GM12878 (cell line): ENCODE measurements at regions of chr1 and their contacts with region 1.

Region 1: GRCh38 chr1:74733604-74734484 is 892 bp downstream of the TYW3 start:
- DNase-seq: no peak
- ATAC-seq: peak; percentile 66
- H3K4me3 ChIP-seq: peak overlapping the region; percentile 81
- H3K27ac ChIP-seq: peak overlapping the region; percentile 90
- H3K4me1 ChIP-seq: peaks cover 10% of the 10 kb centered on the region; the same call in 1 of the 2 replicates
- H3K27me3 ChIP-seq: no peaks in the 10 kb centered on the region
- CTCF ChIP-seq: peak; percentile 74 to 89 (median 86)
- EP300 ChIP-seq: no peak
- POLR2A ChIP-seq: no peak
- RAD21 ChIP-seq: peak; percentile 84

Region 2: DNA sequence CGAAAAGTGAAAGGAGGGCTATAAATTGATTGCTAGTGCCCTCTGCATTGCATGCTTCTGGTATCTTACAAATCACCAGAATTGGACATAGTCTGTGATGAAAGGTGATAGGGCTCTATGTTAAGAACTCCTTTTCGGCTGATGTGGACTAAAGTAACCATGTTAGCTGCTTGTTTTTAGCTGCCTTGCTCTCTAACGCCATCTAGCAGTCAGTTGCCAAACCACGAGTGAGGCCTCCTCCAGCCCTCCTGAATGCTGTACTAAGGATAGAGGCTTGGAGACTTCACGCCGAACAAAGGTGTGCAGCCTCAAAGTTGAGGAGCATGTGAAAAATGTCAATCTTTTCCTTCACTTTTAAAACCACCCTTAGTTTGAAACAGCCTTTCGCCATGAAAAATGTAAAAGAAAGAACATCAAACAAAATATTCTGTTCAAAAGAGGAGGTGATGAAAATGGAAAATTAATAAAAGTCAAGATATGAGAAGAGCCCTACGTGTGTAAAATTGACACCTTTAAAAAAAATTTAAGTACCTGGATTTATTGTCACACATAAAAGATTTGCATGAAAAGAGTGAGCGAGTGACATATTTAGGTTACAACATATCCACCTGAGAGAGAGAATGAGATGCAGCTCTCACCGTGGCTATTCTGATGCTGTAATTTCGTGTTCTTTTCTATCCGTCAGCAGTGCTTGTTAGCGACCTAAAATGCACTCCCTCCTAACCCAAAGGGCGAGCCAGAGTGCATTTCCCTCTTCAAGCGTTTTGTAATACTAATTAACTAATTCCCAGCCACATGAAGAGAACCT is 229.5 kb before region 1 on chr1:
- CTCF ChIA-PET with region 1: interaction called, 18 read pairs
- POLR2A ChIA-PET with region 1: no interaction called
- RAD21 ChIA-PET with region 1: interaction called, 8 read pairs
- SMC1A ChIA-PET with region 1: interaction called, 18 read pairs
- in situ Hi-C with region 1: no loop called
- intact Hi-C with region 1: loop called (anchors 5 kb)
- DNase-seq: peak; percentile 33
- ATAC-seq: peak; percentile 99
- H3K4me3 ChIP-seq: no peak overlapping the region
- H3K27ac ChIP-seq: no peak overlapping the region
- H3K4me1 ChIP-seq: no peaks in the 10 kb centered on the region
- H3K27me3 ChIP-seq: no peaks in the 10 kb centered on the region
- CTCF ChIP-seq: peak; percentile 82 to 89 (median 88)
- EP300 ChIP-seq: no peak
- POLR2A ChIP-seq: no peak
- RAD21 ChIP-seq: peak; percentile 74

Region 3: GRCh38 chr1:74579425-74579824 is 154.4 kb before region 1 on chr1:
- CTCF ChIA-PET with region 1: interaction called, 4 read pairs
- POLR2A ChIA-PET with region 1: no interaction called
- RAD21 ChIA-PET with region 1: interaction called, 4 read pairs
- SMC1A ChIA-PET with region 1: interaction called, 3 read pairs
- in situ Hi-C with region 1: no loop called
- intact Hi-C with region 1: loop called (anchors 5 kb)
- DNase-seq: peak; percentile 65
- ATAC-seq: peak; percentile 98
- H3K4me3 ChIP-seq: no peak overlapping the region
- H3K27ac ChIP-seq: no peak overlapping the region
- H3K4me1 ChIP-seq: peaks cover 6% of the 10 kb centered on the region; the same call in 1 of the 2 replicates
- H3K27me3 ChIP-seq: no peaks in the 10 kb centered on the region
- CTCF ChIP-seq: no peak
- EP300 ChIP-seq: no peak
- POLR2A ChIP-seq: no peak
- RAD21 ChIP-seq: no peak

Region 4: DNA sequence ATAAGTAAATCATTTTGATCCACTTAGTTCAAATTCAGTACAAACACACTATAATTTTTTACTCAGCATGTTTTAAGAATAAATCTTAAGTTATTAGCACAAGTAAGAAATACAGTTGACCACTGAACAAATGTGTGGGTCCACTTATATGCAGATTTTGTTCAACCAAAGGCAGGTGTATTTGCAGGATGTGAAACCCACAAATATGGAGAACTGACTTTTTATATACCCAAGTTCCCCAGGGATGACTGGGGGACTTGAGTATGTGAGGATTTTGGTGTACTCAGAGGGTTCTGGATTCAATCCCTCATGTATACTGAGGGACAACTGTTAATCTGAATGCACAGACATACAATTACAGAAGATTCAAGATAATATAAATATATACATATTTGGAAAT is 34.5 kb before region 1 on chr1:
- CTCF ChIA-PET with region 1: interaction called, 5 read pairs
- POLR2A ChIA-PET with region 1: interaction called, 4 read pairs
- RAD21 ChIA-PET with region 1: interaction called, 11 read pairs
- SMC1A ChIA-PET with region 1: interaction called, 25 read pairs
- in situ Hi-C with region 1: no loop called
- intact Hi-C with region 1: loop called (anchors 2 kb)
- DNase-seq: no peak
- ATAC-seq: peak; percentile 38; the same call in 2 of the 3 replicates
- H3K4me3 ChIP-seq: no peak overlapping the region
- H3K27ac ChIP-seq: no peak overlapping the region; the same call in 1 of the 2 replicates
- H3K4me1 ChIP-seq: peaks cover 16% of the 10 kb centered on the region; the same call in 1 of the 2 replicates
- H3K27me3 ChIP-seq: no peaks in the 10 kb centered on the region
- CTCF ChIP-seq: no peak
- EP300 ChIP-seq: no peak
- POLR2A ChIP-seq: no peak
- RAD21 ChIP-seq: no peak

Region 5: GRCh38 chr1:74748960-74749359 is 15.1 kb after region 1 on chr1:
- CTCF ChIA-PET with region 1: interaction called, 42 read pairs
- POLR2A ChIA-PET with region 1: interaction called, 25 read pairs
- RAD21 ChIA-PET with region 1: interaction called, 91 read pairs
- SMC1A ChIA-PET with region 1: interaction called, 142 read pairs
- in situ Hi-C with region 1: no loop called
- intact Hi-C with region 1: no loop called
- DNase-seq: no peak
- ATAC-seq: peak; percentile 96
- H3K4me3 ChIP-seq: no peak overlapping the region
- H3K27ac ChIP-seq: no peak overlapping the region
- H3K4me1 ChIP-seq: no peaks in the 10 kb centered on the region
- H3K27me3 ChIP-seq: no peaks in the 10 kb centered on the region
- CTCF ChIP-seq: no peak
- EP300 ChIP-seq: no peak; a peak in 1 of 4 replicates
- POLR2A ChIP-seq: no peak
- RAD21 ChIP-seq: no peak